PC-9 (cell line): ENCODE measurements at regions of chr22 and their contacts with region 1.

Region 1: GRCh38 chr22:45645526-45646414 is 25.9 kb upstream of the ATXN10 start:
- DNase-seq: peak; percentile 37 to 85
- H3K4me3 ChIP-seq: no peak overlapping the region
- H3K27ac ChIP-seq: no peak overlapping the region
- H3K4me1 ChIP-seq: peaks cover 33% of the 10 kb centered on the region
- H3K27me3 ChIP-seq: no peaks in the 10 kb centered on the region
- CTCF ChIP-seq: peak; percentile 88

Region 2: DNA sequence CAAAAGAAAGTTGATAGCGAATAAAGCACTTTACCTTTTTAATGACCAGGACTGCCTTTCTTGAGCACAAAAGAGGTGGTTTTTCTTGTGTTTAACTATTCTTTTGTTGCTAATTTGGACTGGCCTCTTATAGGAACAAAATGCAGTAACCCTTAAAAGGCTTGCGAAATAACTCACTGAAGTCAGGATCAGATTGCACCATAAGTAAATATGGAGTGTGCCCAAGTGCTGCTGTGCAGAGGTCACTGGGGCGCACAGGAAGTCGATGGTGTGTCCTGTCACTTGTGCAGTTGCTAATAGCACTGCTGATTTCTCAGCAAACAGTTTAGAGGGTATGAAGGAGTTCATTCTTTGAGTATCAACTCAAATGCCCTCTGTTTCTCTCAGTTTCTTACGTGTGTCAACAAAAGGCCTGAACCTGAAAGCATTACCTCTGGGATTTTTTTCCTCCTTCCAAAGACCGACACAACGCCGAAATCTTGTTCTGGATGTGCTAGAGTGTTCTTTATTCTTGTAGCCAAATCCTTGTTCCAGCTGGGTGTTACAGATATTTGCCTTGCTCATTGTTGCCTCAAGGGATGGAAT is 97.2 kb after region 1 on chr22:
- CTCF ChIA-PET with region 1: no interaction called
- POLR2A ChIA-PET with region 1: no interaction called
- intact Hi-C with region 1: loop called (anchors 1 kb)
- DNase-seq: peak; percentile 56 to 93
- H3K4me3 ChIP-seq: peak overlapping the region; percentile 8; the same call in 1 of the 2 replicates
- H3K27ac ChIP-seq: peak overlapping the region; percentile 93
- H3K4me1 ChIP-seq: peaks cover 66% of the 10 kb centered on the region
- H3K27me3 ChIP-seq: no peaks in the 10 kb centered on the region
- CTCF ChIP-seq: no peak

Region 3: DNA sequence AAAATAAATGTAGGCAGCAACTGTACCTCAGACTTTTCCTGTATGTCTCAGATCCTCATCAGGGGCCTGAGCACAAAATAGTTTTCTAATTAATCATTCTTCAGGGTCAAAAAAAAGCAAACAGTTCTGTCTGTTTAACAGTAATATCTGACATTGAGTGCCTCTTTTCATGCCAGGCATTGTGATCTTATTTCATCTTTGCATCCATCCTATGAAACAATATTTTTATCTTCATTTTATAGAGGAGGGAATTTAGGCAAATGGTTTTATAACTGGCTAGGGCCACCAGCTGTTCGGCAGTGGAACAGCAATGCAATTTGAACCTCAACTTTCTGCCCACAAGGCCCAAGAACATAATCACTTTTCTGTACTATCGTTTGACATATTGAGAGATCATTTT is 185.6 kb after region 1 on chr22:
- CTCF ChIA-PET with region 1: no interaction called
- POLR2A ChIA-PET with region 1: no interaction called
- intact Hi-C with region 1: loop called (anchors 10 kb)
- DNase-seq: no peak
- H3K4me3 ChIP-seq: no peak overlapping the region
- H3K27ac ChIP-seq: peak overlapping the region; percentile 14; the same call in 1 of the 2 replicates
- H3K4me1 ChIP-seq: peaks cover 20% of the 10 kb centered on the region
- H3K27me3 ChIP-seq: no peaks in the 10 kb centered on the region
- CTCF ChIP-seq: peak; percentile 62

Region 4: DNA sequence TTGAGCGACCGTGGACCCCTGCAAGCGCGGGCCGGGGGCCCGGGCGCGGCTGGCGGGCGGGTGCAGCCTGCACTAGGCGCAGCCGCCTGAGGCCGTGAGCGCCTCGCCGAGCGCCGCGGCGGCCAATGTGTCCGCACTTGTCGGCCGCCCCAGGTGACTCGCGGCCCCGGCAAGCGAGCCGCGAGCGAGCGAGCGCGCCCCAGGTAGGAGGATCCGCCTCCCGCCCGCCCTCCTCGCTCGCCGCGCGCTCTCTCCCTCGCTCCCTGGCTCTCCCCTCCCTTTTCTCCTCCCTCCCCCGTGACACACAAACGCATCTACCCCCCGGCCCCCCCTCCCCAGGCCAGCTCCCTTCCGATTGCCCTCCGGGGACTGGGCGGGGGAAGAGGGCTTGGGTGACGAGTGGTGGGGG is 331.2 kb after region 1 on chr22 and contains the start of gene WNT7B:
- CTCF ChIA-PET with region 1: no interaction called
- POLR2A ChIA-PET with region 1: interaction called, 31 read pairs
- intact Hi-C with region 1: no loop called
- DNase-seq: peak; percentile 79 to 86
- H3K4me3 ChIP-seq: peak within 1 kb of the TSS; percentile 99
- H3K27ac ChIP-seq: no peak within 1 kb of the TSS
- H3K4me1 ChIP-seq: peaks cover 36% of the 10 kb centered on the region
- H3K27me3 ChIP-seq: no peaks in the 10 kb centered on the region
- CTCF ChIP-seq: no peak
- total RNA-seq, gene WNT7B: 66.9 and 75.5 TPM in 2 replicates